ENCODE measurements at regions of chr17 and their contacts with region 1.

Region 1: DNA sequence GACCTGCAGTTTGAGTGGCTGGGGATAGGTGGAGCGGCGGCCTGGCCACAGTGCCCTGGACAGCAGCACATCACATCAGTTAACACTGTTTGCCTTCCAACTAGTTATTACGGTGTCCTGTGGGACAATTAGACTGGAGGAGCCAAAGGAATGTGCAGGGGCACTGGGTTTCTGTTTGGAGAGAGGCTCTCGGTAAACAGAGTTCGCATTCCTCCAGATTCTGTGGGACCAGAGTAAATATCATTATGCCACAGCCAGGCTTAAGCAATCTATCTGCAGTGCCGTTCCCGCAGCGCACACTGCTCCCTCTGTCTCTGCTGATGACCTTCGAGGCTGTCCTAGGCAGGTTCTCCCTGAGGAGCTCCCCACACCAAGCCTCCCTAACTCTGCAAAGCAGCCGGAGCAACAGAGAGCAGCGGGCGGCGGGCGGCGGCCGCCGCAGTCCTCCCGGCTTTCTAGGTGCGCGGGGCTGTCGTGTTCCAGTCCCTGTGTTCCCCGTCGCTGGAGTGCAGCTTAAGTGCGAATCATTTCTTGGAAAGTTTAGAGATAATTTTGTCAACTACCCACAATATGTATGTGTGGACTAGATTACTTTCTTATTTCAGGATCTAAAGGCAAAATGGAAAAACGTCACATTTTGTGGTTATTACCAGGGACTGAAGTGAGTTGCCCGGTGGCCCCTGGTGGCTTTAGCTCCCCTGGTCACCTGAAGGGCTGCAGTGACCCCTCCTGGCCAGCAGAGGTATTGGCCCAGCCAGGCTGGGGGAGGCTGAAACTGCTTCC is 43.2 kb downstream of the PGS1 start:
- DNase-seq: peak; percentile 79
- ATAC-seq: peak; percentile 96
- H3K4me3 Mint-ChIP-seq: no peak overlapping the region
- H3K27ac Mint-ChIP-seq: no peak overlapping the region
- H3K4me1 Mint-ChIP-seq: peaks cover 20% of the 10 kb centered on the region
- H3K27me3 Mint-ChIP-seq: no peaks in the 10 kb centered on the region
- CTCF ChIP-seq: peak; percentile 96

Region 2: DNA sequence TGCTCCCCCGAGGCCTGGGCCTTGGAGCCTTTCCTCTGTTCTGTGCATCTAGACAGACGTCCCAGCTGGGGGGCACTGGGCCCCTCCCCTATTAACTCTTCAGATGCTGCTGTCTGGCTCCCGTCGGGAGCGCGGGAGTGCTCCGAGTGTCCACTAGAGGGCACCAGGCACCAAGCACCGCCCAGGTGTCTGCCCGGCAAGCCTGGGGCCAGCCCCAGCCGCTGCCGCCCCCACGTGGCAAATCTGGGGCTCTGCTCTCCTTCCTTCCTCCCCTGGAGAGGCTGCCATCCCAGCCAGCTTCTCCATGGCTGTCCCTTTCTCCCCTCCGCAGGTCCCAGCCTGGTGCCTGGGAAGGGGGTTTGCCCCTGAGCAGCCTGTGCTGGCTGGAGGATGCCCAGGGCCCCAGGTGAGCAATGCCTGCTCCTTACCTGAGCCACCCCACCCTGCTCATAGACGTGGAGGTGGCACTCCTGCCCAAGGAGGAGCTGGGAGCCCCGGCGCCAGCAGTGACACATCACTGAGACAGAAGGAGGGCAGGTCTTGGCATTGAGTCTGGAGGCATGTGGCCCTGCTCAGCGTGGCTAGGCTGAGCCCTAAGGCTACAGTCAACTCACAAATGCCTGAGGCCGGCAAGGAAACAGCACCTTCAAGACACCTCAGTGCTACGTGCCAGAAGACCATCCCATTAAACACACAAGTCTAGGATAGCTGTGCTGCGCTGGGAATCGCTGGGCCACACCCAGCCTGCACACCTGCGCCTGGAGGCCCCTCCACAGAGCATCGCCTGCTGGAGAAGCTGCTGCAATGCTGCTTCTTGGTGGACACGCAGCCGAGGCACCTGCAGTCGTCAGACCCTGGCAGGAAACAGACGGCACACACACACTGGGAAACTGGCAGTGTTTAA is 170.5 kb before region 1 on chr17:
- CTCF ChIA-PET with region 1: interaction called, 23 read pairs
- POLR2A ChIA-PET with region 1: interaction called, 4 read pairs
- intact Hi-C with region 1: loop called (anchors 5 kb)
- DNase-seq: peak; percentile 89
- ATAC-seq: peak; percentile 78
- H3K4me3 Mint-ChIP-seq: peak overlapping the region; percentile 29
- H3K27ac Mint-ChIP-seq: peak overlapping the region; percentile 61
- H3K4me1 Mint-ChIP-seq: peaks cover 32% of the 10 kb centered on the region
- H3K27me3 Mint-ChIP-seq: no peaks in the 10 kb centered on the region
- CTCF ChIP-seq: peak; percentile 98

Region 3: GRCh38 chr17:78289802-78290363 is 131.8 kb before region 1 on chr17:
- CTCF ChIA-PET with region 1: interaction called, 37 read pairs
- POLR2A ChIA-PET with region 1: no interaction called
- intact Hi-C with region 1: no loop called
- DNase-seq: peak; percentile 87
- ATAC-seq: peak; percentile 99
- H3K4me3 Mint-ChIP-seq: no peak overlapping the region
- H3K27ac Mint-ChIP-seq: no peak overlapping the region
- H3K4me1 Mint-ChIP-seq: peaks cover 3% of the 10 kb centered on the region
- H3K27me3 Mint-ChIP-seq: no peaks in the 10 kb centered on the region
- CTCF ChIP-seq: peak; percentile 83

Region 4: DNA sequence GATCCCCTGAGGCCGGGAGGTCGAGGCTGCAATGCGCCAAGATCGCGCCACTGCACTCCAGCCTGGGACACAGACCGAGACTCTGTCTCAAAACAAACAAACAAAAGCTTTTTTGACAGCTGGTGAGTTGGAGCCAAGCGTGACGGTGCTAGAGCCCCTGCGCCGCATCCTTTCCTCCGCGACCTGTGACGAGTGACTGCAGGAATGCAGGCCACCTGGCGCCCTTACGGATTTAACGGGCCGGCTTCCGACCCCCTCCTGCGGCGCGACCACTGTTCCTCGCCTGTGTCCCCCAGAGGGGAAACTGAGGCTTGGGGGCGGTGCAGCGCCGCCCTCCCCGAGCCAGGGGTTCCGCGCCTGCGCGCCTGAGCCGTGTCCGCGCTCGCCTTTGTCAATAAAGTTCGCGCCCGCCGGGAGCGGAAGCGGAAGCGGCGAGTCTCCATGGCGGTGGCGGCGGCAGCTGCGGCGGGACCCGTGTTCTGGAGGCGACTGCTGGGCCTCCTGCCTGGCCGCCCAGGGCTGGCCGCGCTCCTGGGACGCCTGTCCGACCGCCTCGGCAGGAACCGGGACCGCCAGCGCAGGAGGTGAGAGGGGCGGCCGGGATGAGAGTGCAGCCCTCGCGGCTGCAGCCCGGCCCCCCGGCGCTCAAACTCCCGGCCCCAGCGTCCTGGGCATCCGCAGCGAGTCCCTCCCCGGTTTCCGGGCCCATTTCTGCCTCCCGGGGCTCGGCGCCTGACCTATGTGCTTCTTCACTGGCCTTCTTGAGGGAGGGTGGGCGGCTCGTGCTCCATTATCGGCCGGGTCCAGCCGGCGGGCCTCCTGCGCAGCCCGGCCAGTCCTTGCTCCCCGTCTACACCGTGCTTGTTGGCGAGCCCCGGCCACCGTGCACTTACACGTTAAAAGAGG is 43.2 kb before region 1 on chr17 and contains the start of gene PGS1:
- CTCF ChIA-PET with region 1: interaction called, 11 read pairs
- POLR2A ChIA-PET with region 1: no interaction called
- intact Hi-C with region 1: no loop called
- DNase-seq: peak; percentile 86
- ATAC-seq: peak; percentile 40
- H3K4me3 Mint-ChIP-seq: peak within 1 kb of the TSS; percentile 98
- H3K27ac Mint-ChIP-seq: peak within 1 kb of the TSS; percentile 94
- H3K4me1 Mint-ChIP-seq: peaks cover 46% of the 10 kb centered on the region
- H3K27me3 Mint-ChIP-seq: no peaks in the 10 kb centered on the region
- CTCF ChIP-seq: no peak
- total RNA-seq, gene PGS1: 42.1 to 43.3 TPM

Region 5: DNA sequence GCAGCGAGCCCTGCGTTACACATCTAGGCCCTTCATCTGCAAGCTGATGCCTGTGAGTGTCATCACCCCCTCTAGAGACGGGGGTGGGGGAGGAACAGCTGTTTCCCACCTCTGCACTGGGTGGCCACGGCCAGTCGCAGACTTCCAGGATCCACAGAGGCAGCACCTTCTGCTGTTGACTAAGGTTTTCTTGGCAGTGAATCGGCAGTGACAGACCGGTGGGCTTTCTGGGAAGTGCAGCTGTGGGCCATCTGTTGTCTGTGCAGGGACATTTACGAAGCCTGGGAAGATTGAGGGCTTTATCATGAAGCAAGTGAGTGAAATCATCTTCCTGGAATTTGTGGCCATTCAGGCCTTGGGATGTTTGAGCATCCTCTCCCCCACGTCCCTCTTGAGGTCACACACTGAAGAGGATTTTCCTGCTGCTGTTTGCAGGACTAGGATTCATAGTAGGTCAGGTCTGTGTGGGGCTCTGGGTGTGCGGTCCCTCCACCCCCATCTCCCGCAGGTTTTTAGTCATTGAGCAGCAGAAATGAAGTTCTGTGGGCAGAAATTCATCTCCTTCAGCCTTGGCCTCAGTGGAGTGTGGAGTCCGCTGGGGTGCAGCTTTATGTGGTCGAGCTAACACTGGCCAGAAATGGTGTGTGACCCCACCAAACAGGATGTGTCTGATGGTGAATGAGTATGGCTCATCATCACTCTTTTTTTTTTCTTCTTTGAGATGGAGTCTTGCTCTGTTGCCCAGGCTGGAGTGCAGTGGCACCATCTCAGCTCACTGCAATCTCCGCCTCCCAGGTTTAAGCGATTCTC is 31.2 kb before region 1 on chr17:
- CTCF ChIA-PET with region 1: interaction called, 17 read pairs
- POLR2A ChIA-PET with region 1: interaction called, 4 read pairs
- intact Hi-C with region 1: no loop called
- DNase-seq: peak; percentile 30
- ATAC-seq: no peak
- H3K4me3 Mint-ChIP-seq: no peak overlapping the region
- H3K27ac Mint-ChIP-seq: peak overlapping the region; percentile 66
- H3K4me1 Mint-ChIP-seq: peaks cover 50% of the 10 kb centered on the region
- H3K27me3 Mint-ChIP-seq: no peaks in the 10 kb centered on the region
- CTCF ChIP-seq: no peak

Measured in activated CD8-positive, alpha-beta T cell treated with anti-CD3 and anti-CD28 coated beads for 36 hours (primary cell).